Posterior vena cava (tissue), 2 donors: ENCODE measurements at regions of chr12 and their contacts with region 1.

Region 1: DNA sequence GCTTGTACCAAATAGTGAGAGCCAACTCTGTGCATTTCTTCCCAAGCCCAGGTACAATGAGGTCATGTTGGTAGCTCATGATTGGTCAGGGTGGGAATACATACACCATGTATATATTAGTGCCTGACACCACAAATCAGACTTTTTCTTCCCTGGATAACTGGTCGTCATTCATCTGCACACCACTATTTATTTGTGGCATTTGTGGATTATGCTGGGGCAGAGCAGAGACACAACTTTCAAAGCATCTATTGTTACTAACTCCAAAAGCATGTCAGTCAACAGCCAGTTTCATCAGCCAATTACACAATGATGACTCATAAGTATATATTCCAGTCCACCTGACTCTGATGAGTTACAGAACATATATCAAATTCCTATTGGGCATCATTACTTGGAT is 181.7 kb downstream of the ADAMTS20 start:
- DNase-seq: no peak

Region 2: DNA sequence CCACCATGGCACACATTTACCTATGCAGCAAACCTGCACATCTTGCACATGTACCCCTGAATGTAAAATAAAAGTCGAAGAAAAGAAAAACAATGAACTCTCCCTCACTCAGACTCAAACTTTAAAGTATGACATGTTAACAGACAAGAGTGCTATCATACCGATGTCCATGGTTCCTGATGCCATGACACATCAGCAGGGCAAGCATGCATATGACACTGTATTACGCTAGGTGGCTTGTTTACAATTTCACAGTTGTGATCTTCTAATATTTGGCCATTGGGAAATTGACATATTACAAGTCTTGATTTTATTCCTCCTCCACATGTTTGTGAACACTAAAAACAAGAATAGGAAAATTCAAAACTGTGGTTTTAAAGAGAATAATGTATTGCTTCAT is 55.1 kb after region 1 on chr12:
- intact Hi-C with region 1: loop called in 1 of 2 experiments (anchors 2 kb)
- DNase-seq: no peak